MCF 10A (cell line): ENCODE measurements at regions of chr6 and their contacts with region 1.

Region 1: GRCh38 chr6:146543211-146543939 is at the start of gene RAB32:
- DNase-seq: peak; percentile 93
- H3K4me3 Mint-ChIP-seq: peak within 1 kb of the TSS; percentile 94
- H3K27ac Mint-ChIP-seq: peak within 1 kb of the TSS; percentile 97
- H3K4me1 Mint-ChIP-seq: peaks cover 13% of the 10 kb centered on the region
- H3K27me3 Mint-ChIP-seq: no peaks in the 10 kb centered on the region
- CTCF ChIP-seq: peak; percentile 64
- total RNA-seq, gene RAB32: 39.7 and 73.6 TPM in 2 replicates

Region 2: GRCh38 chr6:145963216-145964068 is 579.9 kb before region 1 on chr6:
- CTCF ChIA-PET with region 1: interaction called, 3 read pairs
- POLR2A ChIA-PET with region 1: interaction called, 22 read pairs
- intact Hi-C with region 1: no loop called
- DNase-seq: peak; percentile 47
- H3K4me3 Mint-ChIP-seq: peak overlapping the region; percentile 96
- H3K27ac Mint-ChIP-seq: peak overlapping the region; percentile 98
- H3K4me1 Mint-ChIP-seq: peaks cover 20% of the 10 kb centered on the region
- H3K27me3 Mint-ChIP-seq: no peaks in the 10 kb centered on the region
- CTCF ChIP-seq: no peak

Region 3: DNA sequence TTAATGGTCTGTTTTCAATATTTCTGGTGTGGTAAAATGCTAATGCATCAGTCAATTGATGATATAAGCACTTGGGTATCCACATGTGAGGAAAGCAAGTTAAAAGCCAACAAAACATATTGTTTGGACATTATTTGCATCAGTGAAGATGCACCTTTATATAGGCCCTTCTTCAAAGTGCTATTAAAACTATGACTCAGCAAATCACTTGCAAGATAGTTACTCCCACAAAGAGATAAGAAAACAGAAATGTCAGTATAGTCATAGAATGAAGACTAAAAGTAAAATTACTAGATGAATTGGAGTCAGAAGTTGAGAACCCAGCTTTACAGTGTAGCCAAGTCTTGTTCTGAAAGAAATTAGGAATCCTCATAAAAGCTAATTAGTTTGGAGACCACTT is 529.1 kb before region 1 on chr6:
- CTCF ChIA-PET with region 1: no interaction called
- POLR2A ChIA-PET with region 1: no interaction called
- intact Hi-C with region 1: no loop called
- DNase-seq: no peak
- H3K4me3 Mint-ChIP-seq: no peak overlapping the region
- H3K27ac Mint-ChIP-seq: no peak overlapping the region
- H3K4me1 Mint-ChIP-seq: no peaks in the 10 kb centered on the region
- H3K27me3 Mint-ChIP-seq: peaks cover 79% of the 10 kb centered on the region
- CTCF ChIP-seq: no peak

Region 4: GRCh38 chr6:146357578-146358430 is 185.6 kb before region 1 on chr6:
- CTCF ChIA-PET with region 1: no interaction called
- POLR2A ChIA-PET with region 1: interaction called, 18 read pairs
- intact Hi-C with region 1: loop called (anchors 1 kb)
- DNase-seq: peak; percentile 83
- H3K4me3 Mint-ChIP-seq: peak overlapping the region; percentile 65
- H3K27ac Mint-ChIP-seq: peak overlapping the region; percentile 85
- H3K4me1 Mint-ChIP-seq: peaks cover 39% of the 10 kb centered on the region
- H3K27me3 Mint-ChIP-seq: no peaks in the 10 kb centered on the region
- CTCF ChIP-seq: no peak